ENCODE measurements at regions of chr1 and their contacts with region 1.

Region 1: GRCh38 chr1:54121482-54122134 is 31.2 kb downstream of the CDCP2 start:
- DNase-seq: peak; percentile 89
- ATAC-seq: peak; percentile 90
- H3K4me3 Mint-ChIP-seq: peak overlapping the region; percentile 63
- H3K27ac Mint-ChIP-seq: no peak overlapping the region
- H3K4me1 Mint-ChIP-seq: peaks cover 29% of the 10 kb centered on the region
- H3K27me3 Mint-ChIP-seq: peaks cover 20% of the 10 kb centered on the region
- CTCF ChIP-seq: peak; percentile 64; the same call in 1 of the 2 replicates

Region 2: GRCh38 chr1:54047384-54048305 is 74.0 kb before region 1 on chr1:
- CTCF ChIA-PET with region 1: no interaction called
- POLR2A ChIA-PET with region 1: no interaction called
- DNase-seq: no peak
- ATAC-seq: no peak
- H3K4me3 Mint-ChIP-seq: no peak overlapping the region
- H3K27ac Mint-ChIP-seq: no peak overlapping the region; the same call in 1 of the 2 replicates
- H3K4me1 Mint-ChIP-seq: peaks cover 3% of the 10 kb centered on the region
- H3K27me3 Mint-ChIP-seq: no peaks in the 10 kb centered on the region
- CTCF ChIP-seq: no peak

Region 3: DNA sequence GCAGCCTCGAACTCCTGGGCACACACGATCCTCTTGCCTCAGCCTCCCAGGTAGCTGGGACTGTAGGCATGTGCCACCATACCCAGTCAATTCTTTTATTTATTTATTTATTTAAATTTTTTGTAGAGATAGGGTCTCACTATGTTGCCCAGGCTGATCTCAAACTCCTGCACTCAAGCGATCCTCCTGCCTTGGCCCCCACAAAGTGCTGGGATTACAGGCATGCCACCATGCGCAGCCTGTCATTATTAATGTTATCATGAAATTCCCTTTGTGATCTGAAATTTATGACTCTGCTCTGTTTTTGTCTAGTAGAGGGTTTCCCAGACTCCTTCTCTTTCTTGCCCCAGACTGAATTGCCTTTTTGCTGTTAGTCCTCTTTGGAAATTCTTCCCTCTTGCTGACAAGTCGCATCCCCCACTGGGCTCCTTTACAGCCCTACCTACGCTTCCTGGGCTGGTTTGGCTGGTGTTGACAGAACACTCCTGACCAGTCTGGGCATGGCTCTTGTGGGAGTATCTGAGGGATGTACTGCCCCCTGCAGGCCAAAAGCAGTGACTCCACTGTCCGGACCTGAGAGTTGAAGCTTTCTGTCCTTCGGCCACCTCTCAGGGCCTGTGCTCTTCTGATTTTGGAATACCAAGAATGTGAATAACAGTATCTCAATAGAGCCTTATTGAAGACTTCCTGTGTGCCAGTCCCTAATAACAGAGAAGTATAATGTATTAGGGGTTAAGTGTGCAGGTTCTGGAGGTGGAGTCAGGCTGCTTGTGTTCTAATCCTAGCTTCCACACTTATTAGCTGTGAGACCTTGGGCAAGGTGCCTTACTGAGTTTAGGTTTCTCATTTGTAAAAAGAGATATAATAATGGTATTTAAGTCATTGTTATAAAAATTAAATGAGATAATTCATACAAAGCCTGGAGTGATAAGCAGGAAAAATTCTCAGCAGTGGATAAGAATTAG is 40.0 kb before region 1 on chr1:
- CTCF ChIA-PET with region 1: interaction called, 21 read pairs
- POLR2A ChIA-PET with region 1: no interaction called
- DNase-seq: peak; percentile 93
- ATAC-seq: peak; percentile 100
- H3K4me3 Mint-ChIP-seq: no peak overlapping the region
- H3K27ac Mint-ChIP-seq: 0 out of 2 replicates have a peak overlapping the region, but pooled peaks have one; percentile 4
- H3K4me1 Mint-ChIP-seq: peaks cover 8% of the 10 kb centered on the region
- H3K27me3 Mint-ChIP-seq: no peaks in the 10 kb centered on the region; the same call in 1 of the 2 replicates
- CTCF ChIP-seq: peak; percentile 82

Region 4: DNA sequence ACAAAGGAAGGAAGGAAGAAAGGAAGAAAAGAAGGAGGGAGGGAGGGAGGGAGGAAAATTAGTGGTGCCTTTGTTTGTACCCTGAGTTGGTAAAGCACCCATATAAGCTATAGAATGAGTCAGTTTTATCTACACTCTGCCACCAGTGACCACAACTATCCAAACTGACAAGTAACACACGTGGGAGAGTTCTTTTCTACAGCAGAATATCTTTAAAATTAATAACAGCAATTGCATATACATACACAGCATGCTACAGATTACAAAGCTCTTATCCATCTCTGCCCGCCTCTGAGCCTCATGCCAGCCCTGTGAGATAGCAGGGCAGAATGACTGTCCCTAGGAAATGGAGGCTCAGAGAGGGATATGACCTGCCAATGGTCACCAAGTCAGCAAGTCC is 10.9 kb after region 1 on chr1:
- CTCF ChIA-PET with region 1: interaction called, 39 read pairs
- POLR2A ChIA-PET with region 1: interaction called, 3 read pairs
- DNase-seq: no peak
- ATAC-seq: no peak
- H3K4me3 Mint-ChIP-seq: no peak overlapping the region
- H3K27ac Mint-ChIP-seq: no peak overlapping the region
- H3K4me1 Mint-ChIP-seq: peaks cover 35% of the 10 kb centered on the region
- H3K27me3 Mint-ChIP-seq: peaks cover 3% of the 10 kb centered on the region; the same call in 1 of the 2 replicates
- CTCF ChIP-seq: no peak

Region 5: GRCh38 chr1:54172614-54173599 is 51.3 kb after region 1 on chr1:
- CTCF ChIA-PET with region 1: interaction called, 18 read pairs
- POLR2A ChIA-PET with region 1: no interaction called
- DNase-seq: no peak
- ATAC-seq: no peak
- H3K4me3 Mint-ChIP-seq: no peak overlapping the region
- H3K27ac Mint-ChIP-seq: peak overlapping the region; percentile 28; the same call in 1 of the 2 replicates
- H3K4me1 Mint-ChIP-seq: no peaks in the 10 kb centered on the region
- H3K27me3 Mint-ChIP-seq: no peaks in the 10 kb centered on the region
- CTCF ChIP-seq: no peak

Region 6: DNA sequence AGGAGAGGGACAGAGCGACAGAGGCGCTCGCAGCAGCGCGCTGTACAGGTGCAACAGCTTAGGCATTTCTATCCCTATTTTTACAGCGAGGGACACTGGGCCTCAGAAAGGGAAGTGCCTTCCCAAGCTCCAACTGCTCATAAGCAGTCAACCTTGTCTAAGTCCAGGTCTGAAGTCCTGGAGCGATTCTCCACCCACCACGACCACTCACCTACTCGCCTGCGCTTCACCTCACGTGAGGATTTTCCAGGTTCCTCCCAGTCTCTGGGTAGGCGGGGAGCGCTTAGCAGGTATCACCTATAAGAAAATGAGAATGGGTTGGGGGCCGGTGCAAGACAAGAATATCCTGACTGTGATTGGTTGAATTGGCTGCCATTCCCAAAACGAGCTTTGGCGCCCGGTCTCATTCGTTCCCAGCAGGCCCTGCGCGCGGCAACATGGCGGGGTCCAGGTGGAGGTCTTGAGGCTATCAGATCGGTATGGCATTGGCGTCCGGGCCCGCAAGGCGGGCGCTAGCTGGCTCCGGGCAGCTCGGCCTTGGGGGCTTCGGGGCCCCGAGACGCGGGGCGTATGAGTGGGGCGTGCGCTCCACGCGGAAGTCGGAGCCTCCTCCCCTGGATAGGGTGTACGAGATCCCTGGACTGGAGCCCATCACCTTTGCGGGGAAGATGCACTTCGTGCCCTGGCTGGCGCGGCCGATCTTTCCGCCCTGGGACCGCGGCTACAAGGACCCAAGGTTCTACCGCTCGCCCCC is 78.3 kb after region 1 on chr1 and contains the starts of genes CYB5RL and MRPL37:
- CTCF ChIA-PET with region 1: interaction called, 25 read pairs
- POLR2A ChIA-PET with region 1: no interaction called
- DNase-seq: peak; percentile 93
- ATAC-seq: peak; percentile 99
- H3K4me3 Mint-ChIP-seq: peak within 1 kb of the TSS; percentile 86
- H3K27ac Mint-ChIP-seq: peak within 1 kb of the TSS; percentile 39
- H3K4me1 Mint-ChIP-seq: peaks cover 17% of the 10 kb centered on the region
- H3K27me3 Mint-ChIP-seq: no peaks in the 10 kb centered on the region
- CTCF ChIP-seq: no peak
- total RNA-seq, gene CYB5RL: 13.1 to 14.2 TPM (median 13.4 TPM) in 3 replicates
- total RNA-seq, gene MRPL37: 125 to 143 TPM (median 130 TPM) in 3 replicates

Region 7: DNA sequence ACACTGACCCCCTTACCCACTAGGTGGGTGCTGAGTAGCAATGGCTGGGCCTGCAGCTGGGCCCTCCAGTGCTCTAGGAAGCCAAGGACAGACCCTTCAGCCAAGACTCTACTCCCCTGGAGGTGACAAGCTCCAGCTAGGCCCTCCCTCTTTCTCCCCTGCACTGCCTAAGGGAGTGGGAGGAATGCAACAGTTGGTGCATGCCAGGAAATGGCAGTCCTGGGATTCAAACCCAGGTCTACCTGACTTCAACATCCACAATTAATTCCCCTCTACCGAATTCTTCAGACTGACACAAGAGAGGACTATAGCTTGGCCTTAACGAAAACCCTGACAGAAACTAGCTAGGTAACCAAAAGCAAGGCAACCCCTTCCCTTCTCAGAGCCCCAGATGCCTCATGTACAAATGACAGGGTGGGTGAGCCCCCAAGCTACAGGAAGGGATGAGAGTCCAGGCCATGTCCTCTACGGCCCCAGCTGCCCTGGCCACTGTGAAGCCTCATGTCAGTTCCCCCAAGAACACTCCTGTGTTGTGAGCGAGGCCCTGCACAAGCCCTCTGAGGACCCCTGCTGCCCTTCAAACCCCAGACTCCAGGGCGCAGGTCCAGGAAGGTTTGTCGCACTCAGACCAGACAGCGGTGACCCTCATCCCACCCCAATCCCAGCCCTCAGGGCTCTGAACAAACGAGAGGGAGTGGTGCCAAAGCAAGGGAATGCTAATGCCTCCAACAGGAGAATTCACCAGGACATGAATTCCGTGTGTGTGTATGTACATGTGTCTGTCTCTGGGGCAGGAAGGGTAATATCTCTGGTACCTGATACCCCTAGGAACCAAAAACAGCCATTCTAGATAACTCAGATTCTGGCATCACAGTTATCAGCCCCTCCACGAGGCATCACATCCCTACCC is 170.6 kb after region 1 on chr1:
- CTCF ChIA-PET with region 1: no interaction called
- POLR2A ChIA-PET with region 1: no interaction called
- DNase-seq: no peak
- ATAC-seq: peak; percentile 10; the same call in 1 of the 2 replicates
- H3K4me3 Mint-ChIP-seq: no peak overlapping the region
- H3K27ac Mint-ChIP-seq: peak overlapping the region; percentile 73
- H3K4me1 Mint-ChIP-seq: peaks cover 81% of the 10 kb centered on the region
- H3K27me3 Mint-ChIP-seq: no peaks in the 10 kb centered on the region
- CTCF ChIP-seq: no peak

Region 8: DNA sequence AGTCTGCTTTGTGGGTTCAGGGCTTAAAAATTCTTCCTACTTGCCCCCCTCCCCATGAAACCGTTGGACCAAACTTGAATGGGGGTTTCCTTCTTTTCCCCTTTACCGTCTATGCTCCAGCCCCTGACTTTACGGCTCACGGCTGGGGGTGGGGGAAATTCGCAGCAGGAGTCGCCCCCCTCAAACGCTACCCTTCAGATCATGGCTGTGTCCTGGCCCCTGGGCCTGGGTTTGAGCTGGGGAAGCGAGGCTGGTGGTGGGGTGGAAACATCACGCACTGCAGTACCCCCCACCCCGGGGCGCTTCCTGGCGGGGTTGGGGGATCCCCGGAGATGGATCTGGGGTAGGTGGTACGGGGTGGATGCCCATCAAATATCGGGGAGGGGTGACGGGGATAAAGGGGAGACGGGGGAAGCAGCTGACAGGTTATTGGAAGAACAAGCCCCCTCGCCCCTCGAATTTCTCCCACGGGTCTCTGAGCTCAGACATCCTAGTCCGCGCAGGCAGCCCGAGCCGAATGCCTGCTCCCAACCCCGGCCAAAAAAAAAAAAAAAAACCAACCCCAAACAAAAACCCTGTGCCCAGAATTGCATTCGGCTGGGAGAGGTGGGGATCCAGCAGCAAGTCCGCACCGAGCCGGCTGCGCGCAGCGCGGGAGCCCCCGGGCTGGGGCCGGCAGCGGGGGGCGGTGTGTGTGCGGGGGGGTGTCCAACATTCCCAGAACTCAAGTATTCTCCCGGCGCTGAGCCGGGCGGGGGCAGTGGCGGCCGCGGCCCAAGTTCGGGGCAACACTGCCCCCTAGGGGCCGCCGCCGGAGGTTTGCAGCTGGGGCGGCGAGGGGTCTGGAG is 367.4 kb after region 1 on chr1:
- CTCF ChIA-PET with region 1: interaction called, 10 read pairs
- POLR2A ChIA-PET with region 1: interaction called, 6 read pairs
- DNase-seq: peak; percentile 91
- ATAC-seq: peak; percentile 49
- H3K4me3 Mint-ChIP-seq: peak overlapping the region; percentile 81
- H3K27ac Mint-ChIP-seq: peak overlapping the region; percentile 86
- H3K4me1 Mint-ChIP-seq: peaks cover 32% of the 10 kb centered on the region
- H3K27me3 Mint-ChIP-seq: peaks cover 13% of the 10 kb centered on the region
- CTCF ChIP-seq: peak; percentile 95